AG04449 (cell line): ENCODE measurements at regions of chr12 and their contacts with region 1.

Region 1: DNA sequence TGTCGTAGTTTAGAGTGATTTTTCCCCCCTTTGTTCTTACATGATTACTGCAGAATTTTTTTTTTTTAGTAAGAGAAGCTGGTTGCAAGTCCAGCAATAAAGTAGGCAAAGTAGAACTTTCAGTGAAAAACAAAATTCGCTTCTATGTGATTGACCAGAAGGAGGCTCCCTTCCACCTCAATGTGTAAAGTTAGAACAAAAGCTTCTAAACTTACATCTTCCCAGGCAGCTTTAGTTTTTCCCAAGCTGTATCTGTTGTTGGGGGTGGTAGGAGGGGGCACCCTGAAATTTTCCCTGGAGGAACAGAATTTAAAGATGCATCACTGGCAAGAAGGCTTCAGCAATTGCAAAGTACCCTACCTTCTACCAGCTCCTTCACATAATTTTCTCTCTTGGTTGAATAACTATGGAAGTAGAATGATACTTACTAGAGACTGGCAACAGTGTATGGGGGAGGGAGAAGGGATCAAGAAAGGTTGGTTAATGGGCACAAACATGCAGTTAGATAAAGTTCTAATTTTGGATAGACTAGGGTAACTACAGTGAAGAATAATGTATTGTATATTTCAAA is 87.3 kb upstream of the E2F7 start:
- DNase-seq: no peak
- H3K4me3 ChIP-seq: no peak overlapping the region
- CTCF ChIP-seq: peak; percentile 55

Region 2: GRCh38 chr12:76738934-76739586 is 413.6 kb before region 1 on chr12:
- CTCF ChIA-PET with region 1: no interaction called
- POLR2A ChIA-PET with region 1: no interaction called
- DNase-seq: no peak
- H3K4me3 ChIP-seq: no peak overlapping the region
- CTCF ChIP-seq: no peak

Region 3: DNA sequence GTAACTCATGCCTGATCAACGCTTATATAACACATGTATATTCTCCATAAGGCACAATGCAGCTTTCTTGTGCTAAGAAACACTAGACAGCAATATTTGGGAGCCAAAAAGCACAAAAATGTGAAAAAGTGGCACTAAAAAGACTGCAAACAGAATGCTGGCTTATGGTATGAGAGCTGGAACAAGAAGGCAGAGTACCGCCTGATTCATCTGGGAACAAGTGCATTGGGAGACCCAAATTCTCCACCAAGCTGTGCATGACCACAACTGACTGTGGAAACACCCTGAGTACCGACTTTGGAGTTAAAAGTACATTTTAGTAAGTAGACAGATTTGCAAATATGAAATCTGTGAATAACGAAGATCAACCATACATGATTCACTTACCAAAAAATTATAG is 112.5 kb before region 1 on chr12:
- CTCF ChIA-PET with region 1: no interaction called
- POLR2A ChIA-PET with region 1: no interaction called
- DNase-seq: no peak
- H3K4me3 ChIP-seq: no peak overlapping the region
- CTCF ChIP-seq: no peak

Region 4: DNA sequence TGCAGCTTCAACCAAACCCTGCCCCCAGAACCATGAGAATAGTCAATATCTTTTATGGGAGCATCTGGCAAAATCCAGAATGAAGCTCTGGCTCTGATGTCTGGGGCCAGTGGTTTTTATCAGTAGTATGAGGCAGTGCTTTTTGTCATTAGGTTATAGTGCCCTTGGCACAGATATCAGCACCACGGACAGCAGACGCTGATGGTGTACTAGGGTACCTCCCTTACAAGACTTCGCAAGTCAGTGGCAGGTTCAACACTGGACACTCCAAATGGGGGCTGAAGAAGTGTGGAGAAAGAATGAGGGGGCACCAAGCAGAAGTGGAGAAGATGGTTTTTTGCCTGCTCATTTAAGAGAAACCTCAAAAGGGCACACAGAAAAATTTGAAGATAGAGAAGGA is 19.1 kb before region 1 on chr12:
- CTCF ChIA-PET with region 1: interaction called, 16 read pairs
- POLR2A ChIA-PET with region 1: no interaction called
- DNase-seq: no peak
- H3K4me3 ChIP-seq: no peak overlapping the region
- CTCF ChIP-seq: no peak

Region 5: GRCh38 chr12:77163074-77164038 is 10.6 kb after region 1 on chr12:
- CTCF ChIA-PET with region 1: interaction called, 11 read pairs
- POLR2A ChIA-PET with region 1: no interaction called
- DNase-seq: no peak
- H3K4me3 ChIP-seq: no peak overlapping the region
- CTCF ChIP-seq: no peak

Region 6: DNA sequence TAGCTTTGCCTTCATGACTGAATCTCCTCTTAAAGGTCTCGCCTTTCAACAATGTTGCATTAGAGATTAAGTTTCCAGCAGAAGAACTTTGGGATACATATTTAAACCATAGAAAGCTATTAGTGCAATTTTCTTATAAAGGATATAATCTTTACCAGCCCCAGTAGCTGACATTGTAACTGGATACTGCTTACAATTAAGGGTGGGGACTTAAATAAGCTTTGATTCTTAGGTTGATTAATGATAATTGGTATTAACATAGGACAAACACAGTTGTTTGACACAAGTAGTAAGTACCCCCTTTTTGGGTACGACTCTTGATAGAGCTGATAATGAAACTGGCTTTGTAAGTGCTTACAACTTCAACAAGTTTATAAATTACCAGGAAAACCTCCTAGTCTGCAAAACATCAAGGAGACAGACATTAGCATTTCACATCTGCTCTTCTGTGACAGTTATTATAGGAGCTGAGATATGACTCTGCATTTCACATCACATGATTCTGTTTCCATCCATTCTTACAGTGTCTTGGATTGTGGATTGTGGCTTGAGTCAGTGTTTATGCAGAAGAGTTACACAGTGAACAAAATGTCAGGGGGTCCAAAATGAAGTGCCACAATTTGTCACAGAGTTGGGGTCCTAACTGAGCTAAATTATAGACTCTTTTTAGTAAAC is 161.8 kb after region 1 on chr12:
- CTCF ChIA-PET with region 1: interaction called, 11 read pairs
- POLR2A ChIA-PET with region 1: no interaction called
- DNase-seq: no peak
- H3K4me3 ChIP-seq: no peak overlapping the region
- CTCF ChIP-seq: no peak

Region 7: DNA sequence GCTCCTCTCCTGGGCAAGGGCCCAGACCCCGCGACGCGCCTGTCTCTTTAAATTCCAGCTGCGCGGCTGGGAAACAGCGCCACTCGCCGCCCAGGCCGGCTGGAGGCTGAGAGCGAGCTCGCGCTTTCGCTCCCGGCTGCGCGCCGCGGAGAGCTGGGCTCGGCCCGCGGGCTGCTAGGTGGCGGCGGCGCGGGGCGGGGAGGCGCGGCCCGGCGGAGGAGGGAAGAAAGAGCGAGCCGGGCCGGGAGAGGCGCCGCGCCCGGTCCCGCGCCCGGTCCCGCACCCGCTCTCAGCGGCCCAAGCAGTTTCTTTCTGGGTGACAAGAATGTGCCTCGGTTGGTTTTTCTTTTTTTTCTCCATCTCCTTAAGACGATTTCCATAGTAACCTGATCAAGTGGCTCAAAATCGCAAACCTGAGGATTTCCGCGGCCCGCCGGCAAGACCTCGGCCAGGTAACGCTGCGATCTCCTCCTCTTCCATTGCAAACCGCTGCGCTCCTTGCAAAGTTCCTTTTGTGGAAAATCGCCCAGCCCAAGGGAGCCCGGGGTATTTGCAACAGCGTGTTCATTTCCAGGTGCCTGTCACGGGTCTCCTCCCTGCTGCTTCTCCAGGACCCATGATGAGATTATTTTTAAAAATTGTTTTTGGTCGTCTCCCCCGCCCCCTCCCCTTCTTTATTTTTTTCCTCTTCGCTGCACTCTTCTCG is 172.2 kb after region 1 on chr12:
- CTCF ChIA-PET with region 1: interaction called, 25 read pairs
- POLR2A ChIA-PET with region 1: no interaction called
- DNase-seq: no peak
- H3K4me3 ChIP-seq: peak overlapping the region; percentile 73
- CTCF ChIP-seq: peak; percentile 80

Region 8: DNA sequence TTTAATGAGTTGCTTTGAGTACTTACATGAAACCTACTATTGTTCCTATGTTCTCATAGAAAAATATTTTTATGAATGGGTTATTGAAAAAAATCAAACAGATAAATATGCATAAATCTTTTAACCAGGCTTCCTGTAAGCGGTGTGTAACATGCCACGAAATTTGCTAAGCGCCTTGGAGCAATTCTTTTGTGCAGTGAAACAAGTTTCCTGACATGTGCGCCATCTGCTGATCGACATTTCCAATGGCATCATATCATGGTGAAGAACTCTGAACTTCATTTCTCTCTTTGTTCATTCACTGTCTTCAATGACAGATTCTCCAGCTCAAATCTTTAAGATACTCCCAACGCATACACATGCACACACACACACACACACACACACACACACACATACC is 532.4 kb after region 1 on chr12:
- CTCF ChIA-PET with region 1: interaction called, 93 read pairs
- POLR2A ChIA-PET with region 1: no interaction called
- DNase-seq: peak; percentile 49
- H3K4me3 ChIP-seq: no peak overlapping the region
- CTCF ChIP-seq: peak; percentile 69

Region 9: GRCh38 chr12:77925536-77926108 is 772.9 kb after region 1 on chr12:
- CTCF ChIA-PET with region 1: interaction called, 16 read pairs
- POLR2A ChIA-PET with region 1: no interaction called
- DNase-seq: peak; percentile 94
- H3K4me3 ChIP-seq: no peak overlapping the region
- CTCF ChIP-seq: peak; percentile 94